Activated naive CD4-positive, alpha-beta T cell treated with anti-CD3 and anti-CD28 coated beads for 36 hours (primary cell): ENCODE measurements at regions of chr9 and their contacts with region 1.

Region 1: GRCh38 chr9:6739218-6739617 is 18.6 kb upstream of the KDM4C start:
- DNase-seq: no peak
- H3K4me3 Mint-ChIP-seq: no peak overlapping the region
- H3K27ac Mint-ChIP-seq: no peak overlapping the region
- H3K4me1 Mint-ChIP-seq: no peaks in the 10 kb centered on the region
- H3K27me3 Mint-ChIP-seq: no peaks in the 10 kb centered on the region

Region 2: DNA sequence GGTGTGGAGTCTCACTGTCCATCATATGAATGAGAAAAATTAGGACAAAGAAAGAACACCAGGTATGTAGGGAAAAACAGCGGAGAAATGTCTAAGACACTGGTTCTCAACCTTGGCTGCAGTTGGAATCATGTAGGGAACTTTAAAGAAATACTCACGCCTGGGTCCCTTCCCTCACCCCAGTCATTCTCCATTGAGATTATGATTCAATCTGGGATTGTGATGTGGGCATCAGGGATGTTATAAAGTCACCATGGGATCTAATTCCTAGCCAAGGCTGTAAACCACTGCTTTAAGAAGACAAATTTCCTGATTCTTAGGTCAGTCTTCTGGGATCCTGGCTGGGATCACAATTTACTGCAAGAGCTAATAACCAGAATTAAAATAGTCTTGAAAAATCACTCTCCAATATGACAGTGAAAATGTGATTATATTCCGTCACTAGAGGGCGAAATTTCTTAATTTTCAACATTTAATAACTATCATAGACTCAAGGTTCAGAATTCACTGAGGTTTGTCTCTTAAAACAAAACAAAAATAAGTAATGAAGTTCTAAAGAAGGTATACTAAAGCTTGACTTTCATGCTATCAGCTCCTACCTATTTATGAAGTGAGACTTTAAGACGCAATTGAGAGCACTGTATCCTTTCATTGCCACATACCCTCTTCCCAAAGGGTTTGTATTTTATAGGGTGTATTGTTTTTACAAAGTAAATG is 154.2 kb before region 1 on chr9:
- CTCF ChIA-PET with region 1: interaction called, 7 read pairs
- intact Hi-C with region 1: loop called (anchors 1 kb)
- DNase-seq: no peak
- H3K4me3 Mint-ChIP-seq: no peak overlapping the region
- H3K27ac Mint-ChIP-seq: no peak overlapping the region
- H3K4me1 Mint-ChIP-seq: no peaks in the 10 kb centered on the region
- H3K27me3 Mint-ChIP-seq: no peaks in the 10 kb centered on the region

Region 3: DNA sequence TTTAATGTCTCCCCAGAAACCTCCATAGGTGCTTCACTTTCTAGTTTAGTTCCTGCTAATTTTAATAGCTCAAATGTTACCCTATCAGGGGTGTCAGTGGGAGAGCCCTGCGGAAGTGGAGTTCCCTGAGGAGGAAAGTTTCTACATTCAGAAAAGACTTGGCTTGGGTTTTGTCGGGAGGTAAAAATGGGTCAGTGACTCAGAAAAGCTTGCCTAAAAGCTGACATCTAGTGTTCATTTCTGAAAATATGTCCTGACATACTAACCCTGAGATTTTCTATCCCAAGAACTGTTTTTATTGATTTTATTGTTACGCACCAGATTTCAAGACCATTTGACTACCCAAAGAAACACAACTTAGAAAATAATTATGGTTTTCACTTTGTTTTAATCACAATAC is 52.8 kb before region 1 on chr9:
- CTCF ChIA-PET with region 1: no interaction called
- intact Hi-C with region 1: no loop called
- DNase-seq: no peak
- H3K4me3 Mint-ChIP-seq: no peak overlapping the region
- H3K27ac Mint-ChIP-seq: no peak overlapping the region
- H3K4me1 Mint-ChIP-seq: peaks cover 20% of the 10 kb centered on the region
- H3K27me3 Mint-ChIP-seq: no peaks in the 10 kb centered on the region

Region 4: GRCh38 chr9:6788162-6789016 is 49.2 kb after region 1 on chr9:
- CTCF ChIA-PET with region 1: no interaction called
- intact Hi-C with region 1: no loop called
- DNase-seq: no peak
- H3K4me3 Mint-ChIP-seq: no peak overlapping the region
- H3K27ac Mint-ChIP-seq: no peak overlapping the region
- H3K4me1 Mint-ChIP-seq: peaks cover 46% of the 10 kb centered on the region
- H3K27me3 Mint-ChIP-seq: no peaks in the 10 kb centered on the region

Region 5: DNA sequence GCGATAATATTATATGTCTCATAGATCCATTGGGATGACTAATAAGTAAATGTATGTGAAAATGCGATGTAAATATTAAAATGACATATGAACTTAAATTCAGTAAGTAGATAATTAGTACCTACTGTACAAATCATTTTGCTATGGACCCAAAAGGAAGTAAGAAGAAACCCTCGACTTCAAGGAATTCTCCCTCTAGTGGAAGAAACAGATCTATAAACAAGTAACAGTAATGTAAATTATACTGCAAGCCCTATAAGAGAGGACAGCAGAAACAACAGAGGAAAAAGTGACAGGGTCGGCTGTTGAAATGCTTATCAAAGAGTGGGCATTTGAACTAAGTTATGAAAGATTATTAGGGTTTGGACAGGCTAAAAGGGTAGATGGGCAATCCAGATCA is 740.1 kb after region 1 on chr9:
- CTCF ChIA-PET with region 1: no interaction called
- intact Hi-C with region 1: no loop called
- DNase-seq: no peak
- H3K4me3 Mint-ChIP-seq: no peak overlapping the region
- H3K27ac Mint-ChIP-seq: no peak overlapping the region
- H3K4me1 Mint-ChIP-seq: no peaks in the 10 kb centered on the region
- H3K27me3 Mint-ChIP-seq: peaks cover 5% of the 10 kb centered on the region